Activated B cell treated with CpG ODN at 0.5 μM for 24 hours (primary cell): ENCODE measurements at regions of chr1 and their contacts with region 1.

Region 1: GRCh38 chr1:149886396-149887195 is 12.8 kb upstream of the BOLA1 start:
- DNase-seq: peak; percentile 74
- ATAC-seq: peak; percentile 69
- H3K4me3 Mint-ChIP-seq: no peak overlapping the region
- H3K27ac Mint-ChIP-seq: no peak overlapping the region
- H3K4me1 Mint-ChIP-seq: peaks cover 2% of the 10 kb centered on the region
- H3K27me3 Mint-ChIP-seq: no peaks in the 10 kb centered on the region
- CTCF ChIP-seq: no peak

Region 2: GRCh38 chr1:149899460-149900293 is 13.1 kb after region 1 on chr1 and contains the start of gene BOLA1:
- CTCF ChIA-PET with region 1: interaction called, 3 read pairs
- POLR2A ChIA-PET with region 1: interaction called, 65 read pairs
- intact Hi-C with region 1: loop called (anchors 1 kb)
- DNase-seq: peak; percentile 69
- ATAC-seq: peak; percentile 99
- H3K4me3 Mint-ChIP-seq: peak within 1 kb of the TSS; percentile 92
- H3K27ac Mint-ChIP-seq: peak within 1 kb of the TSS; percentile 86
- H3K4me1 Mint-ChIP-seq: peaks cover 20% of the 10 kb centered on the region
- H3K27me3 Mint-ChIP-seq: no peaks in the 10 kb centered on the region
- CTCF ChIP-seq: no peak
- total RNA-seq, gene BOLA1: 10.2 and 11.6 TPM in 2 replicates

Region 3: DNA sequence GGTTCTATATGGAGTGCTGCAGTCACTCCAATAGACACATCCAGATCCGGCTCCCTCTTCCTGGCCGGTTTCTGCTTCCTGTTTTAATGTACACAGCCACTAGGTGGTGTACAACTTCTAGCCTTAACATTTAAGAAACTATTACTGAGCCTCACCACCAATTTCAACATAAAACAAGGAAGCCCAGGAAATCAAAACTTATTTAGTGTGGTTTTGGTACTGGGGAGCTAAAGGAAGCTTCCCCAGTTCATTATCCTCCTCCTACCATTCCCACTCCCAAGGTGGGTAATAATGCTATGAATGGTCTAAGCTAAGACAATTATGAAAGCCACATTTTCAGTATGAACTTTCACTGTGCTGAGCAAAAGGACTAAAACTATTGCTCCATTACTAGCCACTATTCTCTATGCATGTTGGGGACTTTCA is 75.5 kb after region 1 on chr1:
- CTCF ChIA-PET with region 1: interaction called, 3 read pairs
- POLR2A ChIA-PET with region 1: interaction called, 12 read pairs
- intact Hi-C with region 1: loop called (anchors 1 kb)
- DNase-seq: no peak
- ATAC-seq: peak; percentile 60
- H3K4me3 Mint-ChIP-seq: no peak overlapping the region
- H3K27ac Mint-ChIP-seq: no peak overlapping the region
- H3K4me1 Mint-ChIP-seq: peaks cover 4% of the 10 kb centered on the region
- H3K27me3 Mint-ChIP-seq: peaks cover 2% of the 10 kb centered on the region
- CTCF ChIP-seq: peak; percentile 99

Region 4: GRCh38 chr1:150053926-150054325 is 167.3 kb after region 1 on chr1:
- CTCF ChIA-PET with region 1: interaction called, 4 read pairs
- POLR2A ChIA-PET with region 1: interaction called, 30 read pairs
- intact Hi-C with region 1: no loop called
- DNase-seq: no peak
- ATAC-seq: no peak
- H3K4me3 Mint-ChIP-seq: no peak overlapping the region
- H3K27ac Mint-ChIP-seq: no peak overlapping the region
- H3K4me1 Mint-ChIP-seq: peaks cover 16% of the 10 kb centered on the region
- H3K27me3 Mint-ChIP-seq: no peaks in the 10 kb centered on the region
- CTCF ChIP-seq: no peak

Region 5: DNA sequence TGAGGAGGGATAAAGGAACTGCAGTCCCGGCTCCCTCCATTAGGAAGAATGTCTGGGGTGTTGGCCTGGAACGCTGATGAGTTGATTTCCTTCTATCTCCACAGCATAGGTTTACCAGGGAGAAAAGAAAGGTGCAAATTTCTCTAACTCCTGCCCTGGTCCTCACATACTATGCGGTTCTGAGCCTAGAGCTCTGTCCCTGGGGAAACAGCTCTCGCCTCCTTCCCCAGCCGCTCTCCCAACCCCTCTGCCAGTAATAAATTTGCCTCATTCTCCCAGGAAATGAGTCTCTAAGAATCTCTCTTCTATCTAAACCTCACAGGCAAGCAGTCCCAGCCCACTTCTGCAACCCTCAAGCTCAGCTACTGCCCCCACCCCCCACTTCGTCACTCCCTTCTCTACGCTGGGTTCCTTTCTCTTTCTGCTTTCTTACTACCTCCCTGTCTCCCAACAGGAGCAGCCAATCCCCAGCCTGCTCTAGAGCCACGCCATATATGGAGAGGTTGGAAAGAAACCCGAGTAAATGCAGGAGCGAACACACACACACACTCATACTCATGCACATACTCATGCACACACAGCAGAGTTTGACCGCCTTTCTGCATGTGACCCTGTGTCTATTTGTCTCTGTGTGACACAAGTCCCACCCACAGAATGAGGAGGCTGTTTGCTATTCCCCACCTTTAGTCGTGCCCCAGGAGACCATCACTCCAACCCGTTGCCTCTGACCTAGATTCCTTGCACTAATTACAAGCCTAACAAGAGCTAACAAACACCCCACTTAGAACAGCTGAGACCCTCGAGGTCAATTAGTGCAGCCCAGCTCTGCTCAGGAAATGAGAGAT is 276.5 kb after region 1 on chr1:
- CTCF ChIA-PET with region 1: interaction called, 4 read pairs
- POLR2A ChIA-PET with region 1: interaction called, 111 read pairs
- intact Hi-C with region 1: loop called (anchors 10 kb)
- DNase-seq: peak; percentile 34
- ATAC-seq: peak; percentile 28
- H3K4me3 Mint-ChIP-seq: peak overlapping the region; percentile 81
- H3K27ac Mint-ChIP-seq: peak overlapping the region; percentile 98
- H3K4me1 Mint-ChIP-seq: peaks cover 86% of the 10 kb centered on the region
- H3K27me3 Mint-ChIP-seq: no peaks in the 10 kb centered on the region
- CTCF ChIP-seq: no peak